MCF 10A (cell line): ENCODE measurements at regions of chr1 and their contacts with region 1.

Region 1: DNA sequence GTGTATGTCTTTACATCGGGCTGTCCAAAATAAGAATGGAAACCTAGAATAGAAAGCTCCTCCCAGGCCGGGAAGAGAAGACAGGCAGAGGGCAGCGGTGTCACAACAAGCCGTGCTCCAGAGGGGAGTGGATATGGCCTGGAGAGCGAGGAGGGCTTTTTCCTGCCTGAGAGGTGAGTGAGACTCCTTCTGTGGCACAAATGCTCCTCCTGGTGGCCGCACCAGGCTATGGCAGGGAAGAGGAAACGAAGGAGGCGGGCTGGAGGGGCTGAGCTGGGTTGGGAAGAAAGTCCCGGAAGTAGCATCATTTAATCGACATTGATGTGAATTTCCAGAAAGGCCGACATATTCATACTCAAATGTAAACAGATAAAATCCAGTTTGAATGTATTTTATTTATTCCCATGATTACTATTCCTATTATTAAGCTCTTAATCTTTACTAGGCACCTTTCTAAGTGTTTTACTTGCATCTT is 54.7 kb downstream of the MEF2D start:
- DNase-seq: peak; percentile 91
- H3K4me3 Mint-ChIP-seq: no peak overlapping the region
- H3K27ac Mint-ChIP-seq: no peak overlapping the region
- H3K4me1 Mint-ChIP-seq: no peaks in the 10 kb centered on the region
- H3K27me3 Mint-ChIP-seq: peaks cover 24% of the 10 kb centered on the region
- CTCF ChIP-seq: peak; percentile 99

Region 2: DNA sequence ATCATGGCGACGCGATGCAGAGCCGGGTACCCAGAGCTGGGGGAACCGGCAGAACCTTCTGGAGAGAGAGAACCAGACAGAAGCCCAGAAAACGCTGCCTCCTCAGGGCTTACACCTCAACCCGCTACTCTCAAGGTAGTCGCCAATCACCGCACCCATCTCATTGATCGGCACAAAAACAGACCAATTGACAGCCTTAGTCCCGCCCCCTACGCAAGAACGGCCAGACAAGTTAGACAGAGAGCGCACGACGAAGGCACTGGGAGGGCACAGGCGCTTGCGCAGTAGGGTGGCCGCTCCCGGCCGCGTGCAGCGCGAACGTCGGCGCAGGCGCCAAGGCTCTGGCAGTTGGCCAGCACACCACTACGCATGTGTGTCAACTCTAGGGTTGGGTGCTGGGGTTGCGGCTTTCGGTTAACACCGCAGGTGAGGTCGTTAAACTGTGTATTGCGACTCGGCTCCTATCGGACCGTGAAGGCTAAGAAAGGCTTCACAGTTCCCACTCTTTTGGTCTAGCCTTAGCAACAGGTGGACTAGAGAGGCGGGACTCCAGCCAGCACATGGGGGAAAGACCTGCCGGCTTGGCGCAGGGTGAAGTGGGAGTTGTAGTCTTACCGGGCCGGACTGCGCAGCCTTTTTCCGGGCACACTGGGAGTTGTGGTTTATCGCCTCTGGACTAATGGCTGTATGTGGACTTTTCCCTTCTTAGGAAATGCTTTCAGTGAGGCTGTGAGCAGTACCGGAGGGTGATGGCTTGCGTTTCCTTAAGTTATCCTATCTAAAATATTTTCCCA is 107.4 kb before region 1 on chr1 and contains the starts of genes CCT3 and TSACC:
- CTCF ChIA-PET with region 1: interaction called, 11 read pairs
- POLR2A ChIA-PET with region 1: no interaction called
- intact Hi-C with region 1: no loop called
- DNase-seq: peak; percentile 100
- H3K4me3 Mint-ChIP-seq: peak within 1 kb of the TSS; percentile 96
- H3K27ac Mint-ChIP-seq: peak within 1 kb of the TSS; percentile 76
- H3K4me1 Mint-ChIP-seq: peaks cover 24% of the 10 kb centered on the region
- H3K27me3 Mint-ChIP-seq: no peaks in the 10 kb centered on the region
- CTCF ChIP-seq: no peak
- total RNA-seq, gene CCT3: 495 and 574 TPM in 2 replicates
- total RNA-seq, gene TSACC: 1.8 and 3.6 TPM in 2 replicates

Region 3: GRCh38 chr1:156394835-156395461 is 50.9 kb before region 1 on chr1:
- CTCF ChIA-PET with region 1: interaction called, 452 read pairs
- POLR2A ChIA-PET with region 1: interaction called, 4 read pairs
- intact Hi-C with region 1: no loop called
- DNase-seq: no peak
- H3K4me3 Mint-ChIP-seq: no peak overlapping the region
- H3K27ac Mint-ChIP-seq: no peak overlapping the region
- H3K4me1 Mint-ChIP-seq: peaks cover 6% of the 10 kb centered on the region
- H3K27me3 Mint-ChIP-seq: no peaks in the 10 kb centered on the region
- CTCF ChIP-seq: no peak

Region 4: GRCh38 chr1:156435545-156436141 is 10.2 kb before region 1 on chr1:
- CTCF ChIA-PET with region 1: interaction called, 46 read pairs
- POLR2A ChIA-PET with region 1: no interaction called
- intact Hi-C with region 1: no loop called
- DNase-seq: no peak
- H3K4me3 Mint-ChIP-seq: no peak overlapping the region
- H3K27ac Mint-ChIP-seq: no peak overlapping the region
- H3K4me1 Mint-ChIP-seq: no peaks in the 10 kb centered on the region
- H3K27me3 Mint-ChIP-seq: peaks cover 99% of the 10 kb centered on the region
- CTCF ChIP-seq: no peak

Region 5: DNA sequence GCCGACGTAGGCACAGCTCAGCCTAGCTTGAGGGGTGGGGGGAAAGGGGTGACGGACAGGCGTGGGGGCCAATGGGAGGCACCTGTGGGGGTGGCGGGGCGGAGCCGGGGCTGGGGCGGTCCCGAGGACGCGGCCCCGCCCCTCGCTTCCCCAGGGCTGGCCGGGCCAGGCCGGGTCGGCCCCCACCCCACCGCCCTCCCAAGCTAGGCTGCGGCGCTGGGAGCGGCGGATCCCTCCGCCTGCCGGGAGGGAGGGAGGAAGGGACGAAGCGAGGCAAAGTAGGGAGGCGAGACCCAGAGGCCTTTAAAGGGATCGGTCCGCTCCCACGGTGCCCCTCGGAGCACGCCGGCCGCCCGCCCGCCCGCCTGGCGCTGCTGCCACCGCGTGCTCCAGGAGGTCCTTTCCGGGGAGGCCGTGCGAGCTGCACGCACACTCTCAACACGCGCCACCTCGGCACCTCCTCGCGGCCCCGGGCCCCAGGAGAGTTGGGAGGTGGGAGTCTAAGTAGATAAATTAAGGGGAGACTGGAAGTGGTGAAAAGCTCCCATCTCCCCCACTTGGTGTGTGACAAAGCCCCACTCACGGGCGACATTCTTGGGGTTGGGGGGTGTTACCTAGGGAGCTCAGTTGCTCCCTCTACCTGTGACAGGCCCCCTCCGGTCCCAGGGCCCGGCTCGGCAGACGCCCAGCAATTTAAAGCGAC is 55.1 kb after region 1 on chr1:
- CTCF ChIA-PET with region 1: interaction called, 12 read pairs
- POLR2A ChIA-PET with region 1: interaction called, 7 read pairs
- intact Hi-C with region 1: no loop called
- DNase-seq: peak; percentile 97
- H3K4me3 Mint-ChIP-seq: peak overlapping the region; percentile 85
- H3K27ac Mint-ChIP-seq: peak overlapping the region; percentile 97
- H3K4me1 Mint-ChIP-seq: peaks cover 68% of the 10 kb centered on the region
- H3K27me3 Mint-ChIP-seq: no peaks in the 10 kb centered on the region
- CTCF ChIP-seq: peak; percentile 72

Region 6: GRCh38 chr1:156608036-156608674 is 162.3 kb after region 1 on chr1:
- CTCF ChIA-PET with region 1: interaction called, 19 read pairs
- POLR2A ChIA-PET with region 1: interaction called, 3 read pairs
- intact Hi-C with region 1: no loop called
- DNase-seq: peak; percentile 87
- H3K4me3 Mint-ChIP-seq: no peak overlapping the region
- H3K27ac Mint-ChIP-seq: no peak overlapping the region
- H3K4me1 Mint-ChIP-seq: no peaks in the 10 kb centered on the region
- H3K27me3 Mint-ChIP-seq: peaks cover 24% of the 10 kb centered on the region
- CTCF ChIP-seq: peak; percentile 89